ENCODE measurements at regions of chr13 and their contacts with region 1.

Region 1: DNA sequence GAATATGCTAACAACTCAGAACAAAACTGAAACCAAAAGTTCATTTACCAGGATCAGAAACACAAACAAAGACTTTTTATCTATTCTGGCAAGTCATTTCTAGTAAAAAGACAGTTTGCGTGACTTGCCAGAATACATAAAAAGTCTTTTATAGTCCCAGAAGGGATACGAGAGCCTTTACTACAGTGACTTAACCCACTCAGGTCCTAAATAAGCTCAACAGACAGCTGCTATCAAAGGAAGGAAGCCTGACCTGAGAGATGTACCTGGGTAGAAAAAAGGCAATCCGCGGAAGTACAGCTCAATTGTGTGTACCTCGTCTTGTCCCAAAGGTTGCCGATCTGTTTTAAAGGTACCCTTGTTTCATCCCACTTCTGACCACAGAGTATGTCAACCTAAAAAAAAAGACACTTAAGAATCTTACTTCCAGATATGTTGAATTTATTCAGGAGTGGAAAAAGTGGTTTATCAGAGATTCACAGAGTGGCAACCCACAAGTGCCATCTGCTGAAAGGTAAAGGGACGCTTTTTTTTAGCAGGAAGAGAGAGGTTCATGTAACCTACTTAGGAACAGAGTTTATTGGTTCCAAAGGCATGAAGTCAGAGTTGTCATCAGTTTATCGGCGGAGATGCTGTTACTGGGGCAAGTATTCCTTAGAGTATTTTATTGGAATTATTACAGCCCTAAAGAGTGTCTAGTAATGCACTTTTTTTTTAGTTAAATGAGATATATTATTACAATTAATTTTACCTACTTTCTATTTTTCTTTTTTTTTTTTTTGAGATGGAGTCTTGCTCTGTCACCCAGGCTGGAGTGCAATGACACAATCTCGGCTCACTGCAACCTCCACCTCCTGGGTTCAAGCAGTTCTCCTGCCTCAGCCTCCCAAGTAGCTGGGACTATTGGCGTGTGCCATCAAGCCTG is 69.7 kb upstream of the C1QTNF9B start:
- DNase-seq: peak; percentile 38
- H3K4me3 Mint-ChIP-seq: peak overlapping the region; percentile 29
- H3K27ac Mint-ChIP-seq: peak overlapping the region; percentile 72
- H3K4me1 Mint-ChIP-seq: peaks cover 29% of the 10 kb centered on the region
- H3K27me3 Mint-ChIP-seq: no peaks in the 10 kb centered on the region

Region 2: GRCh38 chr13:23365652-23366051 is 601.3 kb before region 1 on chr13:
- CTCF ChIA-PET with region 1: no interaction called
- intact Hi-C with region 1: no loop called
- DNase-seq: no peak
- H3K4me3 Mint-ChIP-seq: no peak overlapping the region
- H3K27ac Mint-ChIP-seq: no peak overlapping the region
- H3K4me1 Mint-ChIP-seq: peaks cover 3% of the 10 kb centered on the region
- H3K27me3 Mint-ChIP-seq: no peaks in the 10 kb centered on the region

Region 3: GRCh38 chr13:23856008-23856750 is 110.8 kb before region 1 on chr13:
- CTCF ChIA-PET with region 1: no interaction called
- intact Hi-C with region 1: no loop called
- DNase-seq: no peak
- H3K4me3 Mint-ChIP-seq: no peak overlapping the region
- H3K27ac Mint-ChIP-seq: no peak overlapping the region
- H3K4me1 Mint-ChIP-seq: peaks cover 3% of the 10 kb centered on the region
- H3K27me3 Mint-ChIP-seq: no peaks in the 10 kb centered on the region

Region 4: DNA sequence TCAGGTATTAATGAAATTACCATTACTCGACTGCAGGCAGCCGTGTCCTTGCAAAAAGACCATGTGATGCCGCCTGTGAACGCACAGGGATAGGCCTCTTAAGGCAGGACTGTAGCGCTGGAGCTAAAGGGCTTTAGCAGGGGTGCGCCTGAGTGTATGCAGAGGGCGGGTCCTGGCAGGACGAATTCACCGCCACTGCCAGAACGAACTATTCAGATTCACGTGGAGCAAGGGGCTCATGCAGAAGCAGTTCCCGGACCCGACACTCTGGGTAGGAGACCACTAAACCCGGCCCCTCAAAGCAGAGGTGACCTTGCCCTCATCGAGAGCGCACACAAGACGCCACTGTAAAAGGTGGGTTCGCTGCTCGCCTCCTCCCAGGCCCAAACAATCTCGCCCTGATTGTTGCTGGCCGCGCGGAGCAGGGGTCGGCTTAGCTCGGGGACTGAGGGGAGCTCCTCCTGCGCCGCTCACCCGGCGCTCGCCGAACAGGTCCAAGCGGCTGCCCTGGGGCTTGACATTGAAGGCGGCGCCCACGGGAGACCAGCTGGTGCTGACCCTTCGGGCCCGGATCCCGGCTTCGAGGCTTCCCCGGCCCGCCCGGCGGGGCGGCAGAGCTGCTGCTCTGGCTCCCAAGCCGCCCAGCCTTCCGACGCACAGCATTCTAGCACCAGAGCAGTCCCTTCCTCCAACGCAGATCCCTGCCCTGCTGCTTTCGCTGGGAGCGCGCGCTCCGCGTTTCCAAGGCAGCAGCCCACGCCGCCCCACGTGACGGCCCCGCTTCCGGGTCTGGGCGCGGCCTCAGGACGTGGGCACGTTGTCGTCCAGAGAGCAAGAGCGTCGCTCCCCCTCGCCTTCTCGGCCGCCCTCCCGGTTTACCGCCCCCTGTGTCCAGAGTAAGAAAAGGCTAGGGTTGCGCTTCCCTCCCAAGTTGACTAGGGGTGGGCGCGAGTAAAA is 78.0 kb before region 1 on chr13 and contains the start of gene MIPEP:
- CTCF ChIA-PET with region 1: no interaction called
- intact Hi-C with region 1: loop called (anchors 2 kb)
- DNase-seq: peak; percentile 89
- H3K4me3 Mint-ChIP-seq: peak within 1 kb of the TSS; percentile 81
- H3K27ac Mint-ChIP-seq: peak within 1 kb of the TSS; percentile 51
- H3K4me1 Mint-ChIP-seq: peaks cover 24% of the 10 kb centered on the region
- H3K27me3 Mint-ChIP-seq: no peaks in the 10 kb centered on the region
- total RNA-seq, gene MIPEP: 15.4 to 17.0 TPM

Region 5: DNA sequence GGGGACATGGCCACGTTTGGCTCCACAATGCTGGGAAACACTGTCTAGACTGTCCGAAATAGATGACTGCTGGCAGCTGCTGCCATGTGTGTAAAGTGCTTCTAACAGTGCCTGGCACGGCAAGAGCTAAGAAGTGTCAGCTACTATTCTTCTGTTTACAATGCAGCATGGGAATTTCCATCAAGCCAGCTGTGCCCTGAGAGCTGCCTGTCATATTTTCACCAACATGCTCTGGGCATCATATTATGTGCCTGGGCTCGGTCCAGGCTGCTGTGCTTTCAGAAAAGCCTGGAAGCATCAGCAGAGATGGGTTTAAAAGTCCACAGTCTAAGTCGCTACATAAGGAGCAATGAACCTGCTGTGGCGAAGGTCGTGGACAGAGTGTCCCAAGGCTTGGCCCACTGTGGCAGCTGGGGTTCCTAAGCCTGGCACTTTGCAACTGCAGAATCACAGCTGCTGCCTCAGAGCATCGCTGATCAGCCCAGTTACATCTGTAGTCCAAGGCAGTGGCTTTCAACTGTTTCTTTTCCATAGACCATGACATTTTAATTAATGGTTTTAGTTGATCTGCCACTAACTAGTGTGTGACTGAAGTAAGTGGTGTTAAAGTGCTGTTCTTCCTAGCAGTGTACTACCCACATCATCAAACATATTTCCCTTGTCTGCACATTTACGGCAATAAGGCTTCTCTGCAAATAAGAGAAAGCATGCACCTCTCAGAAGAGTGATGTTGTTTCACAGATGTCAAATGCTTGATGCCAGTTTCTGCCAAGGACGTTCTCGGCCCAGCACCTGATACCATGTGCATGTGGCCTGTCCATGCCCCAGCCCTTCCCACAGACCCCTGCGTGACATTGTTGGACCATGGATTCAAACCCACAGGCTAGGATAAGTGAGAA is 26.1 kb after region 1 on chr13:
- CTCF ChIA-PET with region 1: no interaction called
- intact Hi-C with region 1: no loop called
- DNase-seq: no peak
- H3K4me3 Mint-ChIP-seq: no peak overlapping the region
- H3K27ac Mint-ChIP-seq: no peak overlapping the region
- H3K4me1 Mint-ChIP-seq: no peaks in the 10 kb centered on the region
- H3K27me3 Mint-ChIP-seq: peaks cover 11% of the 10 kb centered on the region

Region 6: DNA sequence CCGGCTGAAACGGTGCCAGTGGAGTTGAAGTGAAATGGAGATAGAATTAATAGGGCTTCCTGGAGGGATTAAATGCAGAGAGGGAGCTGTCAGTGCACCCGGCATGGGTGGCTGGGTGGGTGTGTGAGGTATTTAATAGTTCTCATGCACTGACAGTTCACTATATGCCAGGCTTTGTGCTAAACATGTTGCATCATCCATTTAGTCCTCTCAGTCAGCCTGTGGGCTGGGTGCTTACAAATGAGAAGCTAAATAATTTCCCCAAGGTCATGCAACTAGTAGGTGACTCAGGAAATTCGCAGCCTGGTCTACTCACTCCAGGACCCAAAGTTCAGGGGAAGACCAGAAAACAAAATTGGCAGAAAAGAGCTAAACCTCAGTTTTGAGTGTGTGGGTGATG is 130.1 kb after region 1 on chr13:
- CTCF ChIA-PET with region 1: interaction called, 3 read pairs
- intact Hi-C with region 1: loop called (anchors 1 kb)
- DNase-seq: peak; percentile 69
- H3K4me3 Mint-ChIP-seq: no peak overlapping the region
- H3K27ac Mint-ChIP-seq: peak overlapping the region; percentile 65
- H3K4me1 Mint-ChIP-seq: peaks cover 17% of the 10 kb centered on the region
- H3K27me3 Mint-ChIP-seq: peaks cover 6% of the 10 kb centered on the region

Region 7: GRCh38 chr13:24228852-24229458 is 262.0 kb after region 1 on chr13:
- CTCF ChIA-PET with region 1: interaction called, 4 read pairs
- intact Hi-C with region 1: loop called (anchors 2 kb)
- DNase-seq: peak; percentile 63
- H3K4me3 Mint-ChIP-seq: no peak overlapping the region
- H3K27ac Mint-ChIP-seq: no peak overlapping the region
- H3K4me1 Mint-ChIP-seq: peaks cover 34% of the 10 kb centered on the region
- H3K27me3 Mint-ChIP-seq: no peaks in the 10 kb centered on the region